ENCODE measurements at regions of chr17 and their contacts with region 1.

Region 1: GRCh38 chr17:35747540-35748017 is 5.5 kb downstream of the GAS2L2 start:
- DNase-seq: peak; percentile 89
- H3K4me3 ChIP-seq: no peak overlapping the region; a peak in 1 of 4 replicates
- H3K27ac ChIP-seq: no peak overlapping the region
- H3K4me1 ChIP-seq: peaks cover 0 to 15% of the 10 kb centered on the region in 2 experiments; a peak in 1 of 4 replicates
- H3K27me3 ChIP-seq: peaks cover 11% of the 10 kb centered on the region
- CTCF ChIP-seq: peak; percentile 83
- EP300 ChIP-seq: no peak
- RAD21 ChIP-seq: peak; percentile 98

Region 2: GRCh38 chr17:35273684-35274083 is 473.9 kb before region 1 on chr17:
- CTCF ChIA-PET with region 1: no interaction called
- POLR2A ChIA-PET with region 1: no interaction called
- DNase-seq: no peak
- H3K4me3 ChIP-seq: no peak overlapping the region
- H3K27ac ChIP-seq: no peak overlapping the region
- H3K4me1 ChIP-seq: no peaks in the 10 kb centered on the region
- H3K27me3 ChIP-seq: peaks cover 9% of the 10 kb centered on the region; the same call in 1 of the 2 replicates
- CTCF ChIP-seq: no peak
- EP300 ChIP-seq: no peak
- RAD21 ChIP-seq: no peak

Region 3: DNA sequence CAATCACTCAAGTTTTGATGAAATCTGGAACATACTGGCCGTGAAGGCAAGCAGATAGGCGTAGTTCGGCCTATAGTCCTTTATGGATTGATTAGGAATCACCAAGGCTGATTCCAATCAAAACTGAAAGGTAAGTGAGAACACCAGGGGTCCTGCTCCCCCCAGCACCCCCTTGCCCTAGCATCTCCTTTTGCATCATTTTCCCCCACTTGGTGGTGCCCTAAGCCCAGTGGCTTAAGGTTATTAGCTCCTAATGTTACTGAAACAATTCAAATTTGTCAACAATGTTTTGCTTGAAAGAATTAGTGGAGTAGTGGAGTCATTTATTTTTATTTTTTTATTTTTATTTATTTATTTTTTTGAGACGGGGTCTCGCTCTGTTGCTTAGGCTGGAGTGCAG is 191.9 kb before region 1 on chr17:
- CTCF ChIA-PET with region 1: interaction called, 15 read pairs
- POLR2A ChIA-PET with region 1: no interaction called
- DNase-seq: peak; percentile 26
- H3K4me3 ChIP-seq: no peak overlapping the region
- H3K27ac ChIP-seq: no peak overlapping the region
- H3K4me1 ChIP-seq: no peaks in the 10 kb centered on the region
- H3K27me3 ChIP-seq: peaks cover 60% of the 10 kb centered on the region
- CTCF ChIP-seq: peak; percentile 41
- EP300 ChIP-seq: no peak
- RAD21 ChIP-seq: peak; percentile 55

Region 4: GRCh38 chr17:35587074-35587971 is 160.3 kb before region 1 on chr17 and contains the start of gene AP2B1:
- CTCF ChIA-PET with region 1: interaction called, 41 read pairs
- POLR2A ChIA-PET with region 1: no interaction called
- DNase-seq: peak; percentile 88
- H3K4me3 ChIP-seq: peak within 1 kb of the TSS; percentile 73 to 94
- H3K27ac ChIP-seq: peak within 1 kb of the TSS; percentile 85 to 93
- H3K4me1 ChIP-seq: peaks cover 5 to 18% of the 10 kb centered on the region in 2 experiments; a peak in 2 of 4 replicates
- H3K27me3 ChIP-seq: no peaks in the 10 kb centered on the region
- CTCF ChIP-seq: no peak
- EP300 ChIP-seq: no peak; a peak in 1 of 4 replicates
- RAD21 ChIP-seq: no peak
- polyA plus RNA-seq, gene AP2B1: 97.8 and 135 TPM in 2 replicates

Region 5: DNA sequence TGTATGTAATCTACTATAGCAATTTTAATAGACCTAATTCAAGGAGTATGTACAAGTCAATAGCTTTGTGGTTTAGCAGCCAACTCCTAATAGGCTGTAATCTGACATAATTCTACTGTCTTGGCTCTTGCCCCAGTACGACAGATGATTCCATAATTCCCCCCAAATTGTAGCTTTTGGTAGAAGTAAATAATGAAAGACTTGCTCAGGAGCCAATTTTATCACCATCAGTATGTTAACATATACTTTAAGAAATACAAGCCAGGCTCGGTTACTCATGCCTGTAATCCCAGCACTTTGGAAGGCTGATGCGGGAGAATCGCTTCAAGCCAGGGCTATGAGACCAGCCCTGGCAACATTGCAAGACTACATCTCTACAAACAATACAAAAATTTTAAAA is 106.5 kb before region 1 on chr17:
- CTCF ChIA-PET with region 1: interaction called, 11 read pairs
- POLR2A ChIA-PET with region 1: no interaction called
- DNase-seq: no peak
- H3K4me3 ChIP-seq: no peak overlapping the region
- H3K27ac ChIP-seq: no peak overlapping the region
- H3K4me1 ChIP-seq: no peaks in the 10 kb centered on the region
- H3K27me3 ChIP-seq: no peaks in the 10 kb centered on the region
- CTCF ChIP-seq: no peak
- EP300 ChIP-seq: no peak
- RAD21 ChIP-seq: no peak

Region 6: GRCh38 chr17:35674552-35674951 is 73.0 kb before region 1 on chr17:
- CTCF ChIA-PET with region 1: interaction called, 21 read pairs
- POLR2A ChIA-PET with region 1: no interaction called
- DNase-seq: no peak
- H3K4me3 ChIP-seq: no peak overlapping the region
- H3K27ac ChIP-seq: no peak overlapping the region
- H3K4me1 ChIP-seq: no peaks in the 10 kb centered on the region; a peak in 1 of 4 replicates
- H3K27me3 ChIP-seq: no peaks in the 10 kb centered on the region
- CTCF ChIP-seq: no peak
- EP300 ChIP-seq: no peak
- RAD21 ChIP-seq: no peak

Region 7: GRCh38 chr17:35731239-35731931 is 16.2 kb before region 1 on chr17 and contains the start of gene RASL10B:
- CTCF ChIA-PET with region 1: interaction called, 53 read pairs
- POLR2A ChIA-PET with region 1: no interaction called
- DNase-seq: peak; percentile 93
- H3K4me3 ChIP-seq: peak within 1 kb of the TSS; percentile 63 to 65
- H3K27ac ChIP-seq: peak within 1 kb of the TSS in 1 of 2 experiments; percentile 9; a peak in 1 of 4 replicates
- H3K4me1 ChIP-seq: peaks cover 13 to 20% of the 10 kb centered on the region in 2 experiments; a peak in 3 of 4 replicates
- H3K27me3 ChIP-seq: no peaks in the 10 kb centered on the region
- CTCF ChIP-seq: no peak
- EP300 ChIP-seq: no peak
- RAD21 ChIP-seq: no peak
- polyA plus RNA-seq, gene RASL10B: 4.2 and 4.3 TPM in 2 replicates

Measured in SK-N-SH (cell line).